PC-9 (cell line): ENCODE measurements at regions of chr1 and their contacts with region 1.

Region 1: DNA sequence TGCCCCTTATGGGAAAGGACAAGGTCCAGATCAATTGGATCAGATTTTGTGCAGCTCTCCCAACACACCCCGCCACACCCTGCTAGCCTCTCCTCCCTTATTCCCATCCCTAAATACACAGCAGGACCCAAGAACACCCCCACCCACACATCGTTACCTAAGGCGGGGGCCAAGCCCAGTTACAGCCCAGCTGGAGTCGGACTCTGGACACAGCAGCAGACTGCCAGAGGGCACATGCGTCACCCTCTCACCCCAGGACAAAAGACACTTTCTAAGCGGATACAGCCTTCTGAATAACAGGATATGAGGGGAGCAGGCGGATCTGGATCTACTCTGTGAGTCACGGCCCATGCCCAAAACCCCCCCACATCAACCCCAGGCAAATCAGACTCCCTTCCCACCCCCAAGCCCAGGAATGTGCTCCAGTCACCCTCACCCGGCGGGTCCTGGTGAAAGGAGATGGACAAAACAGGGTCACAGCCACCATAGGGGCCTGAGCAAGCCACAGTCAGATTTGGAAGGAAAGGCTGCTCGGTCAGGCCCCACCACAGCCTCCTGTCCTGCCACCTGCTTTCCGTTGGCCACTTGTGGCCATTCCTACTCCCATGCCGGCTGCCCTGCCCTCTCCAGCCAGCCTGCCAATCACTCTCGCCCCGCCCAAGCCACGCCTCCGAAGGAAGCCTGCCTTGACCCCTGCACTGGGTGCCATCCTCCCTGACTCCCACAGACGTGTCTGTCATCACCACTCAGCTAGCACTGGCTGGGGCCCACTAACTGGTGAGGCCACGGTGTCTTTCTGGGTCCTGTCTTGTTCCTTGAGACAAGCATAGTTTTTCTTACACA is 4.0 kb downstream of the S100A16 start:
- DNase-seq: peak; percentile 94 to 98
- H3K4me3 ChIP-seq: peak overlapping the region; percentile 56
- H3K27ac ChIP-seq: peak overlapping the region; percentile 96
- H3K4me1 ChIP-seq: peaks cover 52% of the 10 kb centered on the region
- H3K27me3 ChIP-seq: no peaks in the 10 kb centered on the region
- CTCF ChIP-seq: no peak; the same call in 1 of the 2 replicates

Region 2: DNA sequence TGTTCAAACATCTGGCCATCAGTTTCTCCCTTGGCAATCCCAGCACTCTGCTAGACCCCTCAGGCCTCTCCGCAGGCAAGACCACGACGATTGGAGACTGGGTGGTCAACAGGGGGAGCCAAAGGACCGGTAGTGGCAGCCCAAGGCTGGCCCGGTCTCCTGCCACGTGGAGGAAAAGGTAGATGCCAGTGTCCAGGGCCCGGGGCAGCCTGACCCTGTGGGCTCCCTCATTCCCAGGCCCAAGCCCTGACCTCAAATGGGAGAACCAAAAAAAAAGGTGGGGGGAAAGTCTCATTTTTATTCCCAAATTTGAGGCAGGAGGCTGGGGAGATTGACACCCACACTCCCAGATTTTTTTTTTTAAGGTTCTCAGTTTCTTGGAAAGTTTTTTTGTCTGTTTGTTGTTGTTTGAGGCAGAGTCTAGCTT is 98.0 kb before region 1 on chr1:
- CTCF ChIA-PET with region 1: interaction called, 4 read pairs
- POLR2A ChIA-PET with region 1: no interaction called
- intact Hi-C with region 1: loop called (anchors 1 kb)
- DNase-seq: peak; percentile 52 to 82
- H3K4me3 ChIP-seq: no peak overlapping the region
- H3K27ac ChIP-seq: no peak overlapping the region
- H3K4me1 ChIP-seq: peaks cover 51% of the 10 kb centered on the region
- H3K27me3 ChIP-seq: no peaks in the 10 kb centered on the region
- CTCF ChIP-seq: peak; percentile 96